ENCODE measurements at regions of chr21 and their contacts with region 1.

Region 1: DNA sequence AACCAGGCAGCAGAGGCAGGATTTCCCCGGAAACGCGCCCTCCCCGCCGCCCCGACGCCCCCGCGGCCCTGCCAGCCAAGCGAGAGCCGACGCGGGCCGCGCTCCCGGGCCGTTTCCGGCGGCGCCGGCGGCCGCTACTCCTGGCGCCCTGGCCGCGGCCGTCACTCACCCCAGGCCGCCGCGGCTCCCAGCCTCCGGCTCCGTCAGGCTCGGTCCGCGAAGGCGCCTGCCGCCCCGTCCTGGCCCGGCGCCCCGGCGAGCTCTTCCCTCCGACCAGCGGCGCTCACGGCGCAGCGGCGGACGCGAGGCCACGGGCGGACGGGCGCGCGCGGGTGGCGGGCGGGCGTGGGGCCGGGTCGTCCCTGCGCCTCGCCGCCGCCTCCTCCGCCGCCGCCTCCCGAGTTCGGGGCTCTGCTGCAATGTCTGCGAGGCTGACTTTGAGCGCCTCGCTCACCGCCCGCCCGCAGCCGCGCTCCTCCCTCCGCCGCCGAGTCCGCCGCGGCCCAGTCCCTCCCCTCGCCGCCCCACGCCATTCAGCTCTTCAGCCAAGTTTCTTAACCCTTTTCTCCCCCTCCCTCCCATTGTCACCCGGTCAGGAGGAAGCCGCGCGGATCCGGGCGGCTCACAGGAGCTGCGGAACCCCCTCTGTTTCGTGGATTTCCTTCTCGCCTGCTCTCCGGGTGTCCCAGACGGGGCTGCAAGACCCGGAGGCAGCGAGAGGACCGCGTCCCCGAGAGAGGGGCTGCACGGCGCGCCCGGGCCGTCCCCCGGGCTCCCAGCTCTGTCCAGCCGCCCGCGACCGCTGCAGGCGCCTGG is at the start of gene NRIP1:
- DNase-seq: peak; percentile 88
- H3K4me3 Mint-ChIP-seq: peak within 1 kb of the TSS; percentile 77
- H3K27ac Mint-ChIP-seq: peak within 1 kb of the TSS; percentile 80
- H3K4me1 Mint-ChIP-seq: peaks cover 28% of the 10 kb centered on the region
- H3K27me3 Mint-ChIP-seq: no peaks in the 10 kb centered on the region
- CTCF ChIP-seq: no peak
- total RNA-seq, gene NRIP1: 26.5 and 31.4 TPM in 2 replicates

Region 2: DNA sequence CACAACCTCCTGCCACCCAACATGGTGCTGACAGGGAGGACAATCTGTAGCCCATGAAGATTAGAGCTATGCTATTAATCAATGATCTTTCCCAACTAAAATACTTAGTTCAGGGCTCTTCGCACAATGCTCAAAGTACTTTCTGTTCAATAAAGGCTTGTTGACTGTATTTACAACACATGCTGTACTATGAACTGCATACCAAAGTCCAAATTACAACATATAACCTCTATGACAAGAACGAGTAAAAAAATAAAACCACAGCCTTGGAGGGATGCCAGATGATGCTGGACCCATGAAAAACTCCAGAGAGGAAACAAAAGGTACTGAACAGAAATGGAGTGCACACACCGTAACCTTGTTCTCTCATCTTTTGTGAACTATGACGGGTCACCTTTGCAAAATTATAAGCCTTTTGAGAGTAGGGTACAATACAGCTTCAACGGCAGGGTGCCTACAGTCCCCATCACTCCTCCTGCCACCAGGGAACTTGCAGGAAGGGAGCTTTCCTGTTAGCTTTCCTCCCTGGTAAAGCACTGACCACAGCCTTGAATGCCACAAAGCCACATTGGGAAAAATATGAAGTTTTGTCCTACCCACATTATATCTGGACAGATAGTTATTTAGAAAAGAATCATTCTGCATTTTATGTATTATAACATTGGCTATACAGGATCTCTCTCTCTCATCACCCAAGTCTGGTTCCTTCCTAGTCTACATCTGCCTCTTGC is 175.5 kb before region 1 on chr21:
- CTCF ChIA-PET with region 1: interaction called, 3 read pairs
- POLR2A ChIA-PET with region 1: interaction called, 11 read pairs
- intact Hi-C with region 1: no loop called
- DNase-seq: peak; percentile 84
- H3K4me3 Mint-ChIP-seq: peak overlapping the region; percentile 54
- H3K27ac Mint-ChIP-seq: peak overlapping the region; percentile 97
- H3K4me1 Mint-ChIP-seq: peaks cover 35% of the 10 kb centered on the region
- H3K27me3 Mint-ChIP-seq: no peaks in the 10 kb centered on the region
- CTCF ChIP-seq: no peak

Region 3: GRCh38 chr21:15172992-15173626 is 108.3 kb after region 1 on chr21:
- CTCF ChIA-PET with region 1: no interaction called
- POLR2A ChIA-PET with region 1: no interaction called
- intact Hi-C with region 1: no loop called
- DNase-seq: no peak
- H3K4me3 Mint-ChIP-seq: no peak overlapping the region
- H3K27ac Mint-ChIP-seq: no peak overlapping the region
- H3K4me1 Mint-ChIP-seq: no peaks in the 10 kb centered on the region
- H3K27me3 Mint-ChIP-seq: no peaks in the 10 kb centered on the region
- CTCF ChIP-seq: no peak

Region 4: GRCh38 chr21:15183813-15184257 is 119.1 kb after region 1 on chr21:
- CTCF ChIA-PET with region 1: no interaction called
- POLR2A ChIA-PET with region 1: interaction called, 15 read pairs
- intact Hi-C with region 1: no loop called
- DNase-seq: no peak
- H3K4me3 Mint-ChIP-seq: no peak overlapping the region
- H3K27ac Mint-ChIP-seq: no peak overlapping the region
- H3K4me1 Mint-ChIP-seq: peaks cover 5% of the 10 kb centered on the region
- H3K27me3 Mint-ChIP-seq: no peaks in the 10 kb centered on the region
- CTCF ChIP-seq: no peak

Region 5: GRCh38 chr21:15221799-15222386 is 157.1 kb after region 1 on chr21:
- CTCF ChIA-PET with region 1: interaction called, 17 read pairs
- POLR2A ChIA-PET with region 1: interaction called, 30 read pairs
- intact Hi-C with region 1: loop called (anchors 1 kb)
- DNase-seq: peak; percentile 98
- H3K4me3 Mint-ChIP-seq: no peak overlapping the region
- H3K27ac Mint-ChIP-seq: no peak overlapping the region
- H3K4me1 Mint-ChIP-seq: peaks cover 34% of the 10 kb centered on the region
- H3K27me3 Mint-ChIP-seq: no peaks in the 10 kb centered on the region
- CTCF ChIP-seq: no peak

Region 6: DNA sequence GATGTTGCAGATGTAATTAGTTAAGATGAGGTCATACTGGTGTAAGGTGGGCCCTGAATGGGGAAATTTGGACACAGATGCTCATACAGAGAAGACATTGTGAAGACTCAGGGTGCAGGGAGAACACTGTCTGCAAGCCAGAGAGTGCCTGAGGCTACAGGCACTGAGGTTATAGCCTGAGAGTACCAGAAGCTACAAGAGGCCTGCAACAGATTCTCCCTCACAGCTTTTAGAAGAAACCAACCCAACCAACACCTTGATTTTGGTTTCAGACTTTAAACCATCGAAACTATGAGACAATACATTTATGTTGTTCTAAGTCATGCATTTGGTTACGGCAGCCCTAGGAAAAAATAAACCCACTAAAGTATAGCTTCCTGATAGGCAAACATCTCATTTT is 343.3 kb after region 1 on chr21:
- CTCF ChIA-PET with region 1: no interaction called
- POLR2A ChIA-PET with region 1: no interaction called
- intact Hi-C with region 1: no loop called
- DNase-seq: no peak
- H3K4me3 Mint-ChIP-seq: no peak overlapping the region
- H3K27ac Mint-ChIP-seq: no peak overlapping the region
- H3K4me1 Mint-ChIP-seq: peaks cover 6% of the 10 kb centered on the region
- H3K27me3 Mint-ChIP-seq: no peaks in the 10 kb centered on the region
- CTCF ChIP-seq: no peak

Region 7: DNA sequence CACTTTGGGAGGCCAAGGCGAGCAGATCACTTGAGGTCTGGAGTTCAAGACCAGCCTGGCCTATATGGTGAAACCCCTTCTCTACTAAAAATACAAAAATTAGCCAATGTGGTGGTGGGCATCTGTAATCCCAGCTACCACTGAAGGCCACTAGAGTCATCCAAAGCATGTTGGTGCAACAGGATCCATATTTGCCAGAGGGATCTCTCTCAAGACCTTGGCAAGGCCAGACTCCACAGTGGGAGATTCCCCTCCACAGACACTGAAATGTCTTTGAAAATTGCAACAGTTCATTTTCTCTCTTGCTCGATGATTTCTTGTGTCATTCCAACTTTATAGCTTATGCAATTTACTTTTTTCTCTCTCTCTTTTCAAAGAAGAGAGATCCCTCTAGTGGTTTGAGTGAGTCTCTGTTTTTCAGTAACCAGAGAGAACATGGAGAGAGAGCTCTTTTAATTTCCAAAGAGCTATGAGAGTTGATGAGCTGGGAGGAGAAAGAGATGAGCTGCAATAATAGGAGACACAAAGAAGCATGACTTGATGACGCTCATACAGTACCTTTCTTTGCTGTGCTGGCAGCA is 488.2 kb after region 1 on chr21:
- CTCF ChIA-PET with region 1: interaction called, 7 read pairs
- POLR2A ChIA-PET with region 1: no interaction called
- intact Hi-C with region 1: loop called (anchors 5 kb)
- DNase-seq: peak; percentile 41
- H3K4me3 Mint-ChIP-seq: no peak overlapping the region
- H3K27ac Mint-ChIP-seq: no peak overlapping the region
- H3K4me1 Mint-ChIP-seq: no peaks in the 10 kb centered on the region
- H3K27me3 Mint-ChIP-seq: no peaks in the 10 kb centered on the region
- CTCF ChIP-seq: peak; percentile 40